Gastrocnemius medialis (tissue), 4 donors: ENCODE measurements at regions of chr3 and their contacts with region 1.

Region 1: DNA sequence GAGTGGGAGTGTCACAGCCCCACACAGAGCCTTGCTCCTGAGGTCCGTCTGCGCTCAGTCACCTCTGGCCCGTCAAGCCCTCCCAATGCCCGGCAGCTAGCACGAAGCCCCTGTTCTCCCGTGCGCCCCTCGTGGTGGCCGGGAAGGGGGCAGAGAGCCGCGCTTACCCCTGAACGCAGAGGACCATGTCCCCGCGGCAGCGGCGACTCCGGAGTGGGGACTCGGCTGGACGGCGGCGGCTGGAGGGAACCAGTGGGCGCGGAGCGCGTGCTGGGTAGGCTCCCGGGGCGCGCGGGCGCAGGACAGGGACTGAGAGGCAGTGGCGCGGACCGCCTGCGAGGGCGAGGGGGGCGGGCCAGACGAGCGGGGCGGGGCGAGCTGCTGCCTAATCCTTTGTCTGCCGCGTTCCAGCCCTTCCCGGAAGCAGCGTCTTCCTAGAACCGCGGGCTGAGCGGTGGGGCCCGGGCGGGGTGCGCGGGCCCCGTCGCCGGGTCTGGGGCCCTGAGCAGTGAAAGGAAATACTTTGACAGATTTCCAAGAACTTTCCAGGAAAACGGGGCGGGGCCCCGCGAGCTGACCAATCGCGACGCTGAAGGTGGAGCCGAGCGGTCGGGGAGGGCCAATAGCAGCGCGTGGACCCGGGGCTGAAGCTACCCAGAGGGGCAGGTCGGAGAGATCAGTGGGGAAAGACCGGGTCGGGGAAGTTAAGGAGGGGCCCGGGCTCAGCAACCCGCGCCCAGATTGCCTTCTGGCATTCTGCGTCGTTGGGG is at the start of gene CISH:
- DNase-seq: peak; percentile 90 to 94
- ATAC-seq: peak; percentile 60 to 64
- H3K4me3 ChIP-seq: peak within 1 kb of the TSS; percentile 65 to 89 (median 77)
- H3K27ac ChIP-seq: peak within 1 kb of the TSS; percentile 95 to 99 (median 96)
- H3K4me1 ChIP-seq: peaks cover 54 to 62% of the 10 kb centered on the region in 2 donors
- H3K27me3 ChIP-seq: no peaks in the 10 kb centered on the region
- CTCF ChIP-seq: peak in 3 of 5 experiments; percentile 18 to 61 (median 28)
- POLR2A ChIP-seq: peak; percentile 94 to 96
- total RNA-seq, gene CISH: 3.3 to 50.5 (median 20.3) TPM

Region 2: GRCh38 chr3:50519471-50520089 is 92.1 kb before region 1 on chr3:
- in situ Hi-C with region 1: no loop called
- intact Hi-C with region 1: loop called (anchors 2 kb)
- DNase-seq: peak; percentile 22 to 56
- ATAC-seq: peak; percentile 73 to 75
- H3K4me3 ChIP-seq: no peak overlapping the region
- H3K27ac ChIP-seq: no peak overlapping the region
- H3K4me1 ChIP-seq: peaks cover 0 to 12% of the 10 kb centered on the region in 2 donors
- H3K27me3 ChIP-seq: no peaks in the 10 kb centered on the region
- CTCF ChIP-seq: peak; percentile 68 to 92 (median 85)
- POLR2A ChIP-seq: no peak

Region 3: DNA sequence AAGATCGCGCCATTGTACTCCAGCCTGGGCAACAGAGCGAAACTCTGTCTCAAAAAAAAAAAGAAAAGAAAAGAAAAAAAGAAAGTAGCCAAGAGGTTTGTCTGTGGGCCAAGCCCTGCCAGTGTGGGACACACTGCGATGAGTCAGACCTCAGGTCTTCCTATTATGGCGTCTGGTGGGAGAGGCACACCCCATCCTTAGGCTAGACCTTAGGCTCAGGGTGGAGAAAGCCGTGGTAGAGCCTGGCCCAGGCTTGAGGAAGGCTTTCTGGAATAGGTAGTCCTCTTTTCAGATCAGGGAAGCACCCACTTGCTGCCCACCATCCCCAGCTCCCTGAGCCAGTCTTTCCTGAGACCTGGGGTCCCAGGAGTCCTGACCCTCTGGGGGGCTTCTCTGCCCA is 36.3 kb before region 1 on chr3:
- in situ Hi-C with region 1: loop called (anchors 5 kb)
- intact Hi-C with region 1: loop called (anchors 1 kb)
- DNase-seq: no peak
- ATAC-seq: no peak
- H3K4me3 ChIP-seq: no peak overlapping the region
- H3K27ac ChIP-seq: no peak overlapping the region
- H3K4me1 ChIP-seq: peaks cover 11 to 13% of the 10 kb centered on the region in 2 donors
- H3K27me3 ChIP-seq: no peaks in the 10 kb centered on the region
- CTCF ChIP-seq: no peak
- POLR2A ChIP-seq: no peak

Region 4: DNA sequence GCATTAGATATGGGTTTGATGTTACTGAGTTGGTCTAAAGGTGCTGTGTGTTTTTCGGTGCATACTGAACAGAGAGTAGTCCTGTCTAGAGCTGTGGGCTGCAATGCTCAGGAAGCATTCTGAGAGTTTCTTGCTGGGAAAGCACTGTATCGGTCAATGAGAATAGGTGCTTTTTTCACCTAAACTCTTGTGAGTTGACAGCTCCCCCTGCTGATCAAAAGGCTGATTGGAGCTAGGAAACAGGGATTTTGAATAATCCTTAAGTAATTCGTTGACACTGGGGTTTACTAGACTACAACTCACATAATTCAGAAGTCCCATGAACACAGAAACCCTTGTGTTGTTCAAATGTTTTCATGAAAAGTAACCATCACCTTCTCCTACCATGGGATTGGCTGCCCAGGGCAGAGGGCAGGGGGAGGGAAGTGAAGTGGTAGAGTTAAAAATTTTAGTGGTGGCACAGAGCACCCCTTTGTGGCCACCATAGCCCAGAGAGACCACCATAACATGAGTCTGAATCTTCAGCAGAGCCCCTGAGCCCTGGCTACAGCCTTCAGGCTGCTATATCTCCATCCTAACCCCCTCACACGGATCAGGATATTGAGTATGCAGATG is 760.4 kb after region 1 on chr3:
- in situ Hi-C with region 1: loop called in 2 of 4 experiments (anchors 10 to 25 kb)
- intact Hi-C with region 1: loop called (anchors 5 kb)
- DNase-seq: no peak
- ATAC-seq: peak; percentile 30 to 46
- H3K4me3 ChIP-seq: no peak overlapping the region
- H3K27ac ChIP-seq: no peak overlapping the region
- H3K4me1 ChIP-seq: no peaks in the 10 kb centered on the region
- H3K27me3 ChIP-seq: no peaks in the 10 kb centered on the region
- CTCF ChIP-seq: peak in 4 of 5 experiments; percentile 19 to 46 (median 40)
- POLR2A ChIP-seq: no peak

Region 5: DNA sequence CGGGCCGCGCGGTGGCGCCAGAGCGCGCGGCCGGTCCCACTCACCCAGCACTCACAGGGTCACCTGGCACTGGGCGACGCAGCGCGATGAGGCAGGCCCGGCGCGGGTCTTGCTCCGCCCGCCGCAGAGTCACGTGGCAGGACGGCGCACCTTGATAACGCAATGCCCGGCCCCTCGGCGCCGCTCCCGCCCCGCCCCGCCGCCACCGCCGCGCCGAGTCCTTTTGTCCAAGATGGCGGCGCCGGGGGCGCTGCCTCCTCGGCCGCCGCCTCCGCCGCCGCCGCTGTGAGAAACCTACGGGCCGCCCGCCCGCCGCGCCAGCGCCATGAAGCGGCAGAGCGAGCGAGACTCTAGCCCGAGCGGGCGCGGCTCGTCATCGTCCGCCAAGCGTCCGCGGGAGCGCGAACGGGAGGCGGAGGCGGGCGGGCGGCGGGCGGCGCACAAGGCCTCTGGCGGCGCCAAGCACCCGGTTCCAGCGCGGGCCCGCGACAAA is 779.5 kb after region 1 on chr3 and contains the start of gene RBM15B:
- in situ Hi-C with region 1: loop called in 1 of 4 experiments (anchors 25 kb)
- intact Hi-C with region 1: no loop called
- DNase-seq: peak; percentile 95 to 97
- ATAC-seq: peak; percentile 81 to 87
- H3K4me3 ChIP-seq: peak within 1 kb of the TSS; percentile 68 to 82 (median 76)
- H3K27ac ChIP-seq: peak within 1 kb of the TSS; percentile 77 to 94 (median 90)
- H3K4me1 ChIP-seq: peaks cover 50 to 60% of the 10 kb centered on the region in 2 donors
- H3K27me3 ChIP-seq: no peaks in the 10 kb centered on the region
- CTCF ChIP-seq: peak in 4 of 5 experiments; percentile 85 to 90 (median 88)
- POLR2A ChIP-seq: peak; percentile 79 to 85
- total RNA-seq, gene RBM15B: 4.9 to 13.7 (median 8.9) TPM